Naive thymus-derived CD8-positive, alpha-beta T cell (primary cell): ENCODE measurements at regions of chr10 and their contacts with region 1.

Region 1: DNA sequence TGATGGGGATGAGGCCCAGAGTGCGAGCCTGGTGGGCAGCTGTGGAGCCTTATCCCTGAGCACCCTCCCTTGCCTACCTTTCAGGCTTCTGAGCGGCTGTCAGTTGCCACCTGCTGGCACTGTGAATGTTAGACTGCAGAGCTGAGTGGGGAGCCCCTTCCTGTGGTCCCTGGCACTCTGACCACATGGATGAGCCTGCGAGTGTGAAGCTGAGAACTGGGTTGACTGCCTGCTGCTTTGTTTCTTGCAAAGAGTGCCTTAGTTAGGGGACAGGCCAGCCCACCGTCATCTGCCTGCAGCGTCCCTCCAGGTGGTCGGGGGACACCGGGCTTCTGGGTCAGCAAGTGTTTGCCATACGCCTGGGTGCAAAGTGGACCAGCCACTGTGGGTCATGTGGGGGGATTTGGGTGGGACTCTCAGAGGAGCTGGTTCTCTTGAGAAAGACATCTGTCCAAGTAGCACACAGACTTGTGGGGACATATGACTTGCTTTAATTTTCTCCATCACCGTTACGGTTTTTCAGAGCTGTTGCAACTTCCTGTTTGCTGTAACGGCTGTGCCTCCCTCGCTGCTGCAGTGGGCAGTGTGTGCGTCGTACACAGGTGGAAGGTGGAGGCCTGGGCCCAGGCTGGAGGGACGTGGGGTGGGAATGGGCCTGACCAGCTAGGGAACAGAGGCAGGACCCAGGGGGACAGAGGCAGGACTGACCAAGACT is 13.7 kb downstream of the INPP5A start:
- DNase-seq: peak in 4 of 10 donors; percentile 26 to 52 (median 42)
- ATAC-seq: peak; percentile 53 to 64
- H3K4me3 Mint-ChIP-seq: peak overlapping the region; percentile 71 to 89 (median 83)
- H3K27ac Mint-ChIP-seq: peak overlapping the region; percentile 78 to 95 (median 88)
- H3K4me1 Mint-ChIP-seq: peaks cover 12 to 52% (median 46%) of the 10 kb centered on the region in 4 donors
- H3K27me3 Mint-ChIP-seq: no peaks in the 10 kb centered on the region

Region 2: DNA sequence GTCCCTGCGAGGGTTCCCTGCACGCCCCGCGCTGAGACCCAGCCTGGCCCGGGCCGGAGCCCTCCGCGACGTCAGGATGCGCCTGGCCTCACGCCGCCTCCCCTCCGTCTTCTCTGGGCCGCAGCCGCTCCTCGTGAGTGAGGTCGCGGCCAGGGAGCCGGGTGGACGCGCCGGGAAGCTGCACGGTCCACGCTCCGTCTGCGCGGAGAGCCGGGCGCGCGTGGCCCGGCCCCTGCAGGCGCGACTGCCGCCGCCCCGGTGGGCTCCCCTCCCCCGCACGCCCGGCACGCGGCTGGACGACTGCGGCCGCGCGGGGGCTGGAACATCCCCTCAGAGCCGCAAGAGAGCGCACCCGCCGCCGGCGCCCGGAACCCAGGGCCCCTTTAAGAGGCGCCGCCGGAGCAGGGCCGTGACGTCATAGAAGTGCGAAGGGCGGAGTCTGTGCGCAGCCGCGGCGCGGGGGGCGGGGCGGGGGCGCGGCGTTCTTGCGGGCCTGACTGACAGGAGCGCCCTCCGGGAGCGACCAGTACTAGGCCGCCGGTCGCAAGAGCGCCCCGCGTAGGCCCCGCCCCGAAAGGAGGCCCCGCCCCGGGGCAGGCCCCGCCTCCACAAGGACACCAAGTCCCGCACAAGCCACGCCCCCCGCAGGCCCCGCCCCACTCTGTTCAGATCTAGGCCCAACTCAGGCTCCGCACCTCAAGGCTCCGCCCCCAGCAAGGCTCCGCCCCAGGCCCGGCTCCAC is 14.1 kb before region 1 on chr10:
- POLR2A ChIA-PET with region 1: interaction called, 61 read pairs
- DNase-seq: peak; percentile 100
- ATAC-seq: peak; percentile 79 to 83
- H3K4me3 Mint-ChIP-seq: peak overlapping the region; percentile 56 to 92 (median 78)
- H3K27ac Mint-ChIP-seq: peak overlapping the region in 7 of 10 donors; percentile 20 to 88 (median 68)
- H3K4me1 Mint-ChIP-seq: peaks cover 33 to 55% (median 50%) of the 10 kb centered on the region in 4 donors
- H3K27me3 Mint-ChIP-seq: peaks cover 0 to 1% (median 0%) of the 10 kb centered on the region in 5 donors